K562 (cell line): ENCODE measurements at regions of chr6 and their contacts with region 1.

Region 1: GRCh38 chr6:143940011-143940597 is 68.0 kb downstream of the PLAGL1 start:
- DNase-seq: peak; percentile 81 to 90 (median 86)
- ATAC-seq: peak; percentile 95
- H3K4me3 ChIP-seq: no peak overlapping the region
- H3K27ac ChIP-seq: no peak overlapping the region
- H3K4me1 ChIP-seq: peaks cover 0 to 3% of the 10 kb centered on the region in 2 experiments; a peak in 1 of 5 replicates
- H3K27me3 ChIP-seq: peaks cover 0 to under 1% of the 10 kb centered on the region in 2 experiments; a peak in 1 of 5 replicates
- CTCF ChIP-seq: peak; percentile 91 to 99 (median 98)
- EP300 ChIP-seq: no peak
- POLR2A ChIP-seq: no peak
- RAD21 ChIP-seq: peak; percentile 78 to 86

Region 2: GRCh38 chr6:143510991-143511891 is 428.9 kb before region 1 on chr6 and contains the start of gene FUCA2:
- CTCF ChIA-PET with region 1: interaction called, 6 read pairs
- POLR2A ChIA-PET with region 1: no interaction called
- in situ Hi-C with region 1: no loop called
- intact Hi-C with region 1: loop called (anchors 5 kb)
- DNase-seq: peak; percentile 92 to 98 (median 93)
- ATAC-seq: peak; percentile 96
- H3K4me3 ChIP-seq: peak within 1 kb of the TSS; percentile 66
- H3K27ac ChIP-seq: peak within 1 kb of the TSS; percentile 91
- H3K4me1 ChIP-seq: peaks cover 10 to 16% of the 10 kb centered on the region in 2 experiments; a peak in 4 of 5 replicates
- H3K27me3 ChIP-seq: no peaks in the 10 kb centered on the region
- CTCF ChIP-seq: peak in 2 of 3 experiments; percentile 6 to 21; a peak in 3 of 6 replicates
- EP300 ChIP-seq: peak; percentile 52
- POLR2A ChIP-seq: peak; percentile 97
- RAD21 ChIP-seq: no peak; a peak in 1 of 4 replicates
- polyA plus RNA-seq, gene FUCA2: 20.6 to 23.9 TPM

Region 3: GRCh38 chr6:143592335-143592734 is 347.8 kb before region 1 on chr6:
- CTCF ChIA-PET with region 1: no interaction called
- POLR2A ChIA-PET with region 1: no interaction called
- in situ Hi-C with region 1: no loop called
- intact Hi-C with region 1: loop called (anchors 5 kb)
- DNase-seq: peak; percentile 70 to 75 (median 72)
- ATAC-seq: peak; percentile 91
- H3K4me3 ChIP-seq: no peak overlapping the region
- H3K27ac ChIP-seq: no peak overlapping the region
- H3K4me1 ChIP-seq: no peaks in the 10 kb centered on the region
- H3K27me3 ChIP-seq: no peaks in the 10 kb centered on the region
- CTCF ChIP-seq: peak; percentile 66 to 83 (median 77)
- EP300 ChIP-seq: no peak
- POLR2A ChIP-seq: no peak
- RAD21 ChIP-seq: peak; percentile 65 to 83

Region 4: GRCh38 chr6:143823548-143823947 is 116.6 kb before region 1 on chr6:
- CTCF ChIA-PET with region 1: no interaction called
- POLR2A ChIA-PET with region 1: no interaction called
- in situ Hi-C with region 1: no loop called
- intact Hi-C with region 1: no loop called
- DNase-seq: no peak
- ATAC-seq: peak; percentile 53
- H3K4me3 ChIP-seq: no peak overlapping the region
- H3K27ac ChIP-seq: no peak overlapping the region
- H3K4me1 ChIP-seq: peaks cover 0 to 6% of the 10 kb centered on the region in 2 experiments; a peak in 1 of 5 replicates
- H3K27me3 ChIP-seq: no peaks in the 10 kb centered on the region
- CTCF ChIP-seq: no peak
- EP300 ChIP-seq: peak; percentile 26; the same call in 1 of the 2 replicates
- POLR2A ChIP-seq: no peak
- RAD21 ChIP-seq: no peak

Region 5: GRCh38 chr6:143958839-143959399 is 18.8 kb after region 1 on chr6:
- CTCF ChIA-PET with region 1: no interaction called
- POLR2A ChIA-PET with region 1: interaction called, 10 read pairs
- in situ Hi-C with region 1: no loop called
- intact Hi-C with region 1: no loop called
- DNase-seq: no peak
- ATAC-seq: no peak
- H3K4me3 ChIP-seq: no peak overlapping the region
- H3K27ac ChIP-seq: no peak overlapping the region
- H3K4me1 ChIP-seq: no peaks in the 10 kb centered on the region; a peak in 1 of 5 replicates
- H3K27me3 ChIP-seq: no peaks in the 10 kb centered on the region
- CTCF ChIP-seq: no peak
- EP300 ChIP-seq: no peak
- POLR2A ChIP-seq: no peak
- RAD21 ChIP-seq: no peak

Region 6: GRCh38 chr6:144036064-144036834 is 96.1 kb after region 1 on chr6:
- CTCF ChIA-PET with region 1: no interaction called
- POLR2A ChIA-PET with region 1: no interaction called
- in situ Hi-C with region 1: no loop called
- intact Hi-C with region 1: loop called (anchors 1 kb)
- DNase-seq: peak in 2 of 4 experiments; percentile 30 to 59
- ATAC-seq: peak; percentile 85
- H3K4me3 ChIP-seq: no peak overlapping the region
- H3K27ac ChIP-seq: no peak overlapping the region
- H3K4me1 ChIP-seq: no peaks in the 10 kb centered on the region
- H3K27me3 ChIP-seq: no peaks in the 10 kb centered on the region
- CTCF ChIP-seq: peak; percentile 20 to 54 (median 38); a peak in 5 of 6 replicates
- EP300 ChIP-seq: no peak
- POLR2A ChIP-seq: no peak
- RAD21 ChIP-seq: peak; percentile 60 to 63

Region 7: GRCh38 chr6:144095331-144096002 is 155.4 kb after region 1 on chr6 and contains the start of gene SF3B5:
- CTCF ChIA-PET with region 1: interaction called, 6 read pairs
- POLR2A ChIA-PET with region 1: no interaction called
- in situ Hi-C with region 1: no loop called
- intact Hi-C with region 1: loop called (anchors 2 kb)
- DNase-seq: peak; percentile 95 to 100 (median 96)
- ATAC-seq: peak; percentile 97
- H3K4me3 ChIP-seq: peak within 1 kb of the TSS; percentile 98
- H3K27ac ChIP-seq: peak within 1 kb of the TSS; percentile 91
- H3K4me1 ChIP-seq: peaks cover 10 to 13% of the 10 kb centered on the region in 2 experiments; a peak in 3 of 5 replicates
- H3K27me3 ChIP-seq: no peaks in the 10 kb centered on the region; a peak in 1 of 5 replicates
- CTCF ChIP-seq: no peak; a peak in 1 of 6 replicates
- EP300 ChIP-seq: peak; percentile 51; the same call in 1 of the 2 replicates
- POLR2A ChIP-seq: peak; percentile 99
- RAD21 ChIP-seq: peak in 1 of 2 experiments; percentile 5; a peak in 1 of 4 replicates
- polyA plus RNA-seq, gene SF3B5: 1,065 to 1,211 TPM